PC-3 (cell line): ENCODE measurements at regions of chr22 and their contacts with region 1.

Region 1: DNA sequence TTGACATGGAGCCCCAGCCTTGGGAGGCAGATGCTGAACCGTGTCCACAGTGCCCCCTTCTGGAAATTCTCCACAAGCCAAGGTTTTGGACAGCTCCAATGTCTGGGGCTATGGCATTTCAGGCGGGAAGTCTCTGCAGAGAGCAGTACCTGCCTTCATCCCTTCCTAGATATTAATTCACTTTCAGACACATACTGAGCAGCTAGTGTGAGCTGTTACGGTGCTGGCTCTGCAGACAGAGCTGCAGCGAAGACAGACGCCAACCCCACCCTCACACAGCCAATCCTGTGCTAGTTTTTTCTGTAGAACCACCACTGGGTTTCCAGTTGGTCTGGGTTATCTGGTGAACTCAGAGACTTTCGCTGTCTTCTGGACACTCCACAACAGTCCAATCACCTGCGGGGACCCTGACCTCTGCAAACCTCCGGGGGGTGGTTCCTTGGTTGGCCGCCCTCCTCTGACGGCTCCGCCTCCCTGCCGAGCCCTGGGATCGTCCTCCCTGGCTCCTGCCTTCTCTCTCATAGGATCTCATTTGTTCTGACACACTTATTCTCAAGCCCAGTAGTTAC is 9.1 kb downstream of the LMF2 start:
- DNase-seq: peak; percentile 63
- ATAC-seq: peak; percentile 81
- H3K4me3 ChIP-seq: no peak overlapping the region
- H3K27ac ChIP-seq: no peak overlapping the region
- H3K4me1 ChIP-seq: no peaks in the 10 kb centered on the region
- H3K27me3 ChIP-seq: no peaks in the 10 kb centered on the region
- CTCF ChIP-seq: peak; percentile 59

Region 2: GRCh38 chr22:50562523-50563412 is 64.4 kb after region 1 on chr22 and contains the start of gene SYCE3:
- CTCF ChIA-PET with region 1: interaction called, 13 read pairs
- POLR2A ChIA-PET with region 1: no interaction called
- intact Hi-C with region 1: no loop called
- DNase-seq: peak; percentile 92
- ATAC-seq: peak; percentile 96
- H3K4me3 ChIP-seq: peak within 1 kb of the TSS; percentile 84
- H3K27ac ChIP-seq: no peak within 1 kb of the TSS
- H3K4me1 ChIP-seq: peaks cover 7% of the 10 kb centered on the region
- H3K27me3 ChIP-seq: no peaks in the 10 kb centered on the region
- CTCF ChIP-seq: peak; percentile 62
- total RNA-seq, gene SYCE3: 1.3 TPM in 1 of 2 replicates, not detected in the other